T-cell (primary cell): ENCODE measurements at regions of chr13 and their contacts with region 1.

Region 1: GRCh38 chr13:88345171-88345847 is 674.1 kb downstream of the SLITRK5 start:
- DNase-seq: no peak
- ATAC-seq: no peak
- H3K4me3 ChIP-seq: no peak overlapping the region
- H3K4me3 Mint-ChIP-seq: no peak overlapping the region
- H3K27ac ChIP-seq: no peak overlapping the region
- H3K27ac Mint-ChIP-seq: no peak overlapping the region
- H3K4me1 ChIP-seq: no peaks in the 10 kb centered on the region
- H3K4me1 Mint-ChIP-seq: no peaks in the 10 kb centered on the region
- H3K27me3 ChIP-seq: no peaks in the 10 kb centered on the region
- H3K27me3 Mint-ChIP-seq: no peaks in the 10 kb centered on the region

Region 2: GRCh38 chr13:88360761-88361160 is 15.5 kb after region 1 on chr13:
- CTCF ChIA-PET with region 1: interaction called in 1 of 2 experiments, 15 read pairs
- POLR2A ChIA-PET with region 1: no interaction called
- DNase-seq: no peak
- ATAC-seq: no peak
- H3K4me3 ChIP-seq: no peak overlapping the region
- H3K4me3 Mint-ChIP-seq: no peak overlapping the region
- H3K27ac ChIP-seq: no peak overlapping the region
- H3K27ac Mint-ChIP-seq: no peak overlapping the region
- H3K4me1 ChIP-seq: no peaks in the 10 kb centered on the region
- H3K4me1 Mint-ChIP-seq: peaks cover 0 to 2% (median 0%) of the 10 kb centered on the region in 3 donors
- H3K27me3 ChIP-seq: no peaks in the 10 kb centered on the region
- H3K27me3 Mint-ChIP-seq: no peaks in the 10 kb centered on the region

Region 3: GRCh38 chr13:88376762-88377388 is 31.6 kb after region 1 on chr13:
- CTCF ChIA-PET with region 1: no interaction called
- POLR2A ChIA-PET with region 1: no interaction called
- DNase-seq: no peak
- ATAC-seq: no peak
- H3K4me3 ChIP-seq: no peak overlapping the region
- H3K4me3 Mint-ChIP-seq: no peak overlapping the region
- H3K27ac ChIP-seq: no peak overlapping the region
- H3K27ac Mint-ChIP-seq: no peak overlapping the region
- H3K4me1 ChIP-seq: no peaks in the 10 kb centered on the region
- H3K4me1 Mint-ChIP-seq: peaks cover 0 to 7% (median 0%) of the 10 kb centered on the region in 3 donors
- H3K27me3 ChIP-seq: no peaks in the 10 kb centered on the region
- H3K27me3 Mint-ChIP-seq: no peaks in the 10 kb centered on the region

Region 4: GRCh38 chr13:88483202-88483601 is 137.9 kb after region 1 on chr13:
- CTCF ChIA-PET with region 1: interaction called in 1 of 2 experiments, 15 read pairs
- POLR2A ChIA-PET with region 1: no interaction called
- DNase-seq: no peak
- ATAC-seq: no peak
- H3K4me3 ChIP-seq: no peak overlapping the region
- H3K4me3 Mint-ChIP-seq: no peak overlapping the region
- H3K27ac ChIP-seq: no peak overlapping the region
- H3K27ac Mint-ChIP-seq: no peak overlapping the region
- H3K4me1 ChIP-seq: no peaks in the 10 kb centered on the region
- H3K4me1 Mint-ChIP-seq: no peaks in the 10 kb centered on the region
- H3K27me3 ChIP-seq: no peaks in the 10 kb centered on the region
- H3K27me3 Mint-ChIP-seq: no peaks in the 10 kb centered on the region